ENCODE measurements at regions of chr10 and their contacts with region 1.

Region 1: GRCh38 chr10:77391605-77392235 is 245.9 kb downstream of the KCNMA1 start:
- DNase-seq: peak; percentile 78
- H3K4me3 ChIP-seq: no peak overlapping the region
- H3K27ac ChIP-seq: peak overlapping the region; percentile 64
- H3K4me1 ChIP-seq: peaks cover 66% of the 10 kb centered on the region
- H3K27me3 ChIP-seq: no peaks in the 10 kb centered on the region
- CTCF ChIP-seq: peak; percentile 59 to 75

Region 2: DNA sequence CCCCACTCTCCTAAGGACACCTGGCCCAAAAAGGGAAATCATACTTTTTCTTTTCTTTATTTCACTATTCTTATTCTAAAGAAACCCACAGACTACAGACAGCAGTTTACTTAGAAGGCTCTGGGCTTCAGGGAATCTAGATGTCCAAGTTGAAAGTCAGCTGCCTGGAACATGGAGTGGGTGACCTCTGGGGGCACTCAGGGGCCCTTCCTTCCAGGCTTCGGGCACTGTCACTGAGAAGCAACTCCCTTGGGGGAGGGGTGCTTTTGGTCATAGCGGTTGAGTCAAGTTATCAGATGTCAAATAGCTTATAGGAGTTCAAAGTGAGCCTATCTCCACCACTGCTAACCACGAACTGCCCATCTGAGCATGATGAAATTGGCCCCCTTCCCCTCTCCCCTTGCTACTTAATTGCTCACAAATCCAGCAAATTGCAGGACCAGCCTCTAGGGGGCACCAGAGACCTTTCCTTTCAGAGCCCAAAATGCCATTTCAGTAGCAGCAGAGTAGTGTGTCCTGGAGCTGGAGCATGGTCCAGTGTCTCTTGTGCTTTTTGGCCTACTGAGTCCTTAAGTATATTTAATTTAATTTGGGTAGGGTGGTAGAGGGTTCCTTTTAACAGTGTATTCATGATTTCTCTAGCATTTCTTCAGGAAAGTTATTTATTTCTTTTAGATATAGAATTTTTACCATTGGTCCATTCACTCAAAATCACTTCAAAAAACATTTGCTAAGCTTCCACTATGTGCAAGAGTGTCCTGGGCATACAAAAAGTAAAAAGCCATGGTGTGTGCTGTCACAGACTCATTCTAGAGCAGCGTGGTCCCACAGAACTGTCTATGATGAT is 217.9 kb before region 1 on chr10:
- CTCF ChIA-PET with region 1: interaction called, 5 read pairs
- dilution Hi-C with region 1: no loop called
- in situ Hi-C with region 1: loop called in 1 of 2 experiments (anchors 10 kb)
- intact Hi-C with region 1: loop called (anchors 1 kb)
- DNase-seq: peak; percentile 62
- H3K4me3 ChIP-seq: no peak overlapping the region
- H3K27ac ChIP-seq: no peak overlapping the region
- H3K4me1 ChIP-seq: peaks cover 7% of the 10 kb centered on the region
- H3K27me3 ChIP-seq: no peaks in the 10 kb centered on the region
- CTCF ChIP-seq: peak; percentile 93 to 95

Region 3: DNA sequence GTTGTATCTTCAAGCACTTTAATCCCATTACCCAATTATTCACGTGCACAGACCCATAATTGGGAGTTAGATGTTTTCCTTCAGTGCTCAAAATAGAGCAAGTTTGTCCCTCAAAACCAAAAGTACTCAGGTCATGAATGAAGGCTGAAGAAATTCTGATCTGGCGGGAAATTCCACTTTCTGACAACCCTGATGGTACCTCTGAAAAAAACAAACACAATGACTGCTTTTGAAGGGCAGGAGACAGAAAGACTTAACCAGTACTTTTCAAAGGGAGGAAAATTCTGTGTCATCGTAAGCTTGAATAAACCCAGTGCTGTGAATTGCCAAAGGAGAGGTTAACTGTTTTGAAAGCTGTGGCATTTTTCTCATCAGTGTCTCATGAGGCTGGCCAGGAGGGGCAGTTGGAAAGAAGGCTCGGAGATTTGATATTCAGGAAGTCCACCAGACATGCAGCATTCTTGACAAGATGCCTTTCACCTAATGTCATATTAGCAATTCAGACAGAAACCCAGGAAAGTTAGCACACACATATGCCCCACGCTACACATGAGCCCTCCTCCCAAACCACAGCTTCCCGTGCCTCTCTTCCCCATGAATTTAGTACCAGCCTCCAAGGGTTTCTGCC is 101.1 kb before region 1 on chr10:
- CTCF ChIA-PET with region 1: no interaction called
- dilution Hi-C with region 1: no loop called
- in situ Hi-C with region 1: no loop called
- intact Hi-C with region 1: loop called (anchors 5 kb)
- DNase-seq: peak; percentile 93
- H3K4me3 ChIP-seq: no peak overlapping the region
- H3K27ac ChIP-seq: peak overlapping the region; percentile 65
- H3K4me1 ChIP-seq: peaks cover 38% of the 10 kb centered on the region
- H3K27me3 ChIP-seq: no peaks in the 10 kb centered on the region
- CTCF ChIP-seq: no peak

Region 4: DNA sequence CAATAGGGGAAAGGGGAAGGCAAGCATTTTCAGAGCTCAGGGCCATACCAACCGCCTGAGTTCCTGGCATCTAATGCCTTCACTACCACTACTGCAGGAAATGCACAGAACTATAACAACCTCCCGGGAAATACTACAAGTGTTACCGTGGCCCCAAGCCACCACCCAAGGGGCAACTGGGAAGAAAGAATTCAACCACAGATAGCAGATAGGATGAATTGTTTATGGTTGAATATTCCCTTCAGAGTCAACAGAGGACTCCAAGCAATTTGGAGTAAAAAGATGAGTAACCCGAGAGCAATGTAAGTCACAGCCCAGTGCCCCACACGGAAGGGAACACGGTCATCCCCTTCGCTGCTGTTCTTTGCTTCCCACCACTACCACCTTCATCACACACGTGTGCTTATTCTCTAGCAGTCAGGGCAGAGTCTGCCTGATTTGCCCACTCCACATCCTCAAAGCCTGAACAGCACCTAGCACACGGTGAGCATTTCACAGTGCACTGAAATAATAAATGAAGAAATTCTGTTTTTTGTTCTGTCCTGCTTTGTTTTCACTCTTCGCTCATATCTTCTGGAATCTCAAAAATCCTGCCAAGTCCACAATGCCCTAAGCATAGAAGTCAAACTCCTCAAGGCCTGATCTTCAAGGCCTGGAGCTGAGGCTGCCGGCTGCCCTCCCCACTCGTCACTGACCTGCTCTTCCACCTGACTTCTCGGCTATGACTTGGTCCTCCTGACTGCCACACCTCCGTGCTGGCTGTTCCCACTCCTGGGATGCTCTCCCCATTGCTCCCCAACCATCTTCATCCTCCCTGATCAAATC is 24.8 kb after region 1 on chr10:
- CTCF ChIA-PET with region 1: no interaction called
- dilution Hi-C with region 1: no loop called
- in situ Hi-C with region 1: no loop called
- intact Hi-C with region 1: loop called (anchors 2 kb)
- DNase-seq: peak; percentile 69
- H3K4me3 ChIP-seq: no peak overlapping the region
- H3K27ac ChIP-seq: peak overlapping the region; percentile 71
- H3K4me1 ChIP-seq: peaks cover 34% of the 10 kb centered on the region
- H3K27me3 ChIP-seq: no peaks in the 10 kb centered on the region
- CTCF ChIP-seq: no peak

Region 5: GRCh38 chr10:77513781-77514331 is 122.1 kb after region 1 on chr10:
- CTCF ChIA-PET with region 1: no interaction called
- dilution Hi-C with region 1: no loop called
- in situ Hi-C with region 1: no loop called
- intact Hi-C with region 1: loop called (anchors 2 kb)
- DNase-seq: peak; percentile 92
- H3K4me3 ChIP-seq: peak overlapping the region in 1 of 3 experiments; percentile 7
- H3K27ac ChIP-seq: peak overlapping the region; percentile 56
- H3K4me1 ChIP-seq: peaks cover 48% of the 10 kb centered on the region
- H3K27me3 ChIP-seq: no peaks in the 10 kb centered on the region
- CTCF ChIP-seq: no peak

Region 6: DNA sequence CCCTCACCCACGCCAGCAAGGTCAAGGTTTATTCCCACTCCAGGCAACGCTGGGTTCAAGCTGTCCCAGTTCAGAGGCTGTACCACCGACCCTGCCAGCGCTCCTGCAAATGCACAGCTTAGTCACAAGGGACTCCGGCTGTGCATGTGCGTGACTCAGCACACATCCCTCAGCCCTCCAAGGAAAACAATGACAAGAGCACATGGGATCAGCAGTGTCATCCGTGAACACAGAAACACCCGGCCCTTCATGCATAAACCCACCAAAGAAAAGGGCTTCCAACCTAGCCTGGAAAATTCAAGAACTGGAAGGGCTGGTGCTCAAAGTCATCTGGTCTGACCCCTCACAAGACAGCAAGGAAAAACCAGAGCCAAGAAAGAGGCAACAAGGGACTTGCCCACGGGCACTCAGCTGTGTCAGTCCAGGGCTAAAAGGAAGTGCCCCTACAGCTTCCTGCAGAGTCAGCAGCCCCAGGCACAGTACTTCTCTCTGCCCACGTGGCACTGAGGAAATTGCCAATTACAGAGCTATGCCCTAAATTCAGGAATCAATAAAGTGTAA is 139.8 kb after region 1 on chr10:
- CTCF ChIA-PET with region 1: no interaction called
- dilution Hi-C with region 1: no loop called
- in situ Hi-C with region 1: no loop called
- intact Hi-C with region 1: no loop called
- DNase-seq: peak; percentile 82
- H3K4me3 ChIP-seq: peak overlapping the region in 1 of 3 experiments; percentile 17
- H3K27ac ChIP-seq: peak overlapping the region; percentile 77
- H3K4me1 ChIP-seq: peaks cover 47% of the 10 kb centered on the region
- H3K27me3 ChIP-seq: no peaks in the 10 kb centered on the region
- CTCF ChIP-seq: no peak

Region 7: GRCh38 chr10:77641788-77642397 is 250.2 kb after region 1 on chr10:
- CTCF ChIA-PET with region 1: interaction called, 8 read pairs
- dilution Hi-C with region 1: loop called (anchors 25 kb)
- in situ Hi-C with region 1: loop called (anchors 10 to 25 kb)
- intact Hi-C with region 1: loop called (anchors 1 kb)
- DNase-seq: peak; percentile 58
- H3K4me3 ChIP-seq: no peak overlapping the region
- H3K27ac ChIP-seq: no peak overlapping the region
- H3K4me1 ChIP-seq: peaks cover 12% of the 10 kb centered on the region
- H3K27me3 ChIP-seq: no peaks in the 10 kb centered on the region
- CTCF ChIP-seq: peak; percentile 71 to 78

Measured in mammary epithelial cell (primary cell).